Naive thymus-derived CD4-positive, alpha-beta T cell (primary cell): ENCODE measurements at regions of chr17 and their contacts with region 1.

Region 1: GRCh38 chr17:43360739-43361505 is 37.9 kb upstream of the ARL4D start:
- DNase-seq: peak; percentile 69 to 97 (median 91)
- ATAC-seq: peak; percentile 88
- H3K4me3 ChIP-seq: peak overlapping the region; percentile 71
- H3K4me3 Mint-ChIP-seq: peak overlapping the region; percentile 87 to 99 (median 96)
- H3K27ac ChIP-seq: peak overlapping the region; percentile 95
- H3K27ac Mint-ChIP-seq: peak overlapping the region; percentile 98 to 100 (median 100)
- H3K4me1 ChIP-seq: peaks cover 13 to 14% of the 10 kb centered on the region in 2 donors
- H3K4me1 Mint-ChIP-seq: peaks cover 9 to 56% (median 38%) of the 10 kb centered on the region in 7 donors
- H3K27me3 ChIP-seq: no peaks in the 10 kb centered on the region
- H3K27me3 Mint-ChIP-seq: peaks cover 0 to 9% (median 0%) of the 10 kb centered on the region in 5 donors

Region 2: GRCh38 chr17:42337442-42337841 is 1023.5 kb before region 1 on chr17:
- CTCF ChIA-PET with region 1: no interaction called
- POLR2A ChIA-PET with region 1: no interaction called
- intact Hi-C with region 1: loop called in 1 of 2 experiments (anchors 5 kb)
- DNase-seq: peak; percentile 23 to 87 (median 80)
- ATAC-seq: peak; percentile 92
- H3K4me3 ChIP-seq: no peak overlapping the region
- H3K4me3 Mint-ChIP-seq: peak overlapping the region; percentile 52 to 84 (median 72)
- H3K27ac ChIP-seq: peak overlapping the region; percentile 77
- H3K27ac Mint-ChIP-seq: peak overlapping the region; percentile 85 to 98 (median 93)
- H3K4me1 ChIP-seq: peaks cover 11 to 29% of the 10 kb centered on the region in 2 donors
- H3K4me1 Mint-ChIP-seq: peaks cover 18 to 73% (median 38%) of the 10 kb centered on the region in 7 donors
- H3K27me3 ChIP-seq: no peaks in the 10 kb centered on the region
- H3K27me3 Mint-ChIP-seq: no peaks in the 10 kb centered on the region

Region 3: DNA sequence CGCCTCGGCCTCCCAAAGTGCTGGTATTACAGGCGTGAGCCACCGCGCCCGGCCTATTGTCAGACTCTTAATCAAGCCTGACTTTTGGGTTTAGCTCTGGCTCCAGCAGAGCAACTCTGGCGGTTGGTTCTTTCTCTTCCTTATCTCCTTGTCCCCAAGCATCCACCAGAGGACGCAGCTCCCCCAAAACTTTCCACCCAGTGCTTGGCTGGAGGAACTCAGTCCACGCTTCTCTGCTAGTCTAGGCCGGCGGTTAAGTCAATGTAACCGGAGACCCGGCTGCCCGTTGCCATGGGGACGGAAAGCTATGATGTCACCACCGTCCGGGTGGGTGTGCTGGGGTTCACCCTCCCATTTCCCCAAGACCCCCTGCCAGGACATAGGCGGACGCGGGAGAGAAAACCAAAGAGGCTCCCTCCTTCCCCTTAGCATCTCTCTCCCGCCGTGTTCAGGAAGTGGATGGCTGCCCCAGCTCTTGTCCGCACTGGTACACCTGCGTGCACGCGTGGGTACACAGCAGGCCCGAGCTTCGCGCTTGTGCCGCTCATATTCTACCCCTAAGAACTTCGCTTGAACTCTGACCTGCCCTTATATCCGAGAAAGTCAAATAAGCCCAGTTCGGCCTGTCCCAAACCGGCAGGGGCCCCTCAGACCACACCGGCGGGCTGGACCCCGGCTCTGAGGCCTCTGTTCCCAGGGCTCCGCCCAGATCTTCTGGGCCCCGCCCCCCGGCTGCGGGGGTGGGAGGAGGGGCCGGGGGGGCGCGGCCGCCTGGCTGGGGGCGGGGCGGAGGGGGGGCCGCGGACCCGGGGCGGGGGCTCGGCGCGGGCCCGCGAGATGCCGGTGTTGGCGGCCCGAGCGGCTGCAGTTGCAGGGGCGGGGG is 336.3 kb before region 1 on chr17 and contains the start of gene RND2:
- CTCF ChIA-PET with region 1: no interaction called
- POLR2A ChIA-PET with region 1: interaction called, 13 read pairs
- intact Hi-C with region 1: no loop called
- DNase-seq: peak; percentile 65 to 85 (median 77)
- ATAC-seq: peak; percentile 81
- H3K4me3 ChIP-seq: peak within 1 kb of the TSS; percentile 70
- H3K4me3 Mint-ChIP-seq: peak within 1 kb of the TSS; percentile 86 to 95 (median 93)
- H3K27ac ChIP-seq: peak within 1 kb of the TSS; percentile 66
- H3K27ac Mint-ChIP-seq: peak within 1 kb of the TSS; percentile 80 to 91 (median 88)
- H3K4me1 ChIP-seq: peaks cover 21% of the 10 kb centered on the region in 2 donors
- H3K4me1 Mint-ChIP-seq: peaks cover 16 to 28% (median 21%) of the 10 kb centered on the region in 7 donors
- H3K27me3 ChIP-seq: no peaks in the 10 kb centered on the region
- H3K27me3 Mint-ChIP-seq: peaks cover 0 to 16% (median 0%) of the 10 kb centered on the region in 5 donors
- total RNA-seq, gene RND2: 0.08 to 0.74 (median 0.38) TPM in 4 of 5 experiments, not detected in the other

Region 4: GRCh38 chr17:43134774-43135453 is 226.0 kb before region 1 on chr17:
- CTCF ChIA-PET with region 1: no interaction called
- POLR2A ChIA-PET with region 1: no interaction called
- intact Hi-C with region 1: no loop called
- DNase-seq: no peak
- ATAC-seq: no peak
- H3K4me3 ChIP-seq: no peak overlapping the region
- H3K4me3 Mint-ChIP-seq: no peak overlapping the region
- H3K27ac ChIP-seq: no peak overlapping the region
- H3K27ac Mint-ChIP-seq: no peak overlapping the region
- H3K4me1 ChIP-seq: no peaks in the 10 kb centered on the region
- H3K4me1 Mint-ChIP-seq: peaks cover 0 to 12% (median 6%) of the 10 kb centered on the region in 7 donors
- H3K27me3 ChIP-seq: no peaks in the 10 kb centered on the region
- H3K27me3 Mint-ChIP-seq: no peaks in the 10 kb centered on the region

Region 5: GRCh38 chr17:43211480-43212402 is 149.2 kb before region 1 on chr17 and contains the start of gene TMEM106A:
- CTCF ChIA-PET with region 1: no interaction called
- POLR2A ChIA-PET with region 1: interaction called, 24 read pairs
- intact Hi-C with region 1: no loop called
- DNase-seq: peak; percentile 50 to 72 (median 70)
- ATAC-seq: peak; percentile 93
- H3K4me3 ChIP-seq: peak within 1 kb of the TSS; percentile 89
- H3K4me3 Mint-ChIP-seq: peak within 1 kb of the TSS; percentile 89 to 100 (median 96)
- H3K27ac ChIP-seq: peak within 1 kb of the TSS; percentile 86
- H3K27ac Mint-ChIP-seq: peak within 1 kb of the TSS; percentile 89 to 98 (median 94)
- H3K4me1 ChIP-seq: peaks cover 15 to 17% of the 10 kb centered on the region in 2 donors
- H3K4me1 Mint-ChIP-seq: peaks cover 24 to 55% (median 46%) of the 10 kb centered on the region in 7 donors
- H3K27me3 ChIP-seq: no peaks in the 10 kb centered on the region
- H3K27me3 Mint-ChIP-seq: no peaks in the 10 kb centered on the region
- total RNA-seq, gene TMEM106A: 10.4 to 20.7 (median 13.9) TPM

Region 6: DNA sequence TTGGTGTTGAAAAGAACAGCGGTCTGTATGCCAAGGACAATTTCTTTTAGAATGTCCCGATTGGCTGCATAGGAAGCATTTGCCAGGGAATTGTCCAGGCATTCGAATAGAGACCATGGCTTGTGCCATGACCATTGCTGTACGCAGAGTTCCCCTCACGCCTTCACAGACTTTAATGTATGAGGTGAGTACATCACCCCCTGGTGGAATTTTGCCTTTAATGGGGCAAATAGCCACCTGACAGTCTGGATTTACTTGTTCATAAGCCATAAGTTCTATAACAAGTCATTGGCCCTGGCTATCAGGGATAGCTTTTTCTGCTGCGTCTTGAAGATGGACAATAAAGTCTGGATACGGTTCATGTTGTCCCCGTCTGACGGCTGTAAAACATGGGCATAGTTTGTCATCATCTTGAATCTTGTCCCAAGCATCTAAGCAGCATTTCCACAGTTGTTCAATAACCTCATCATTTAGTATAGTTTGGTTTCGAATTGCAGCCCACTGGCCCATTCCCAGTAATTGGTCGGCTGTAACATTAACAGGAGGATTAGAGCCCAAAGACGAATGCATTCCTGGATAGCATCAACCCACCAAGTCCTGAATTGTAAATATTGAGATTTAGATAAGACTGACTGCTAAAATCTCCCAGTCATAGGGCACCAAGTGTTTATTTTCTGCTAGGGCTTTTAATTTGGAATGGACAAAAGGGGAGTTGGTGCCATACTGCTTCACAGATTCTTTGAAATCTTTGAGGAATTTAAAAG is 29.9 kb before region 1 on chr17:
- CTCF ChIA-PET with region 1: interaction called, 4 read pairs
- POLR2A ChIA-PET with region 1: interaction called, 12 read pairs
- intact Hi-C with region 1: no loop called
- DNase-seq: no peak
- ATAC-seq: no peak
- H3K4me3 ChIP-seq: no peak overlapping the region
- H3K4me3 Mint-ChIP-seq: no peak overlapping the region
- H3K27ac ChIP-seq: no peak overlapping the region
- H3K27ac Mint-ChIP-seq: peak overlapping the region in 1 of 9 donors; percentile 41
- H3K4me1 ChIP-seq: peaks cover 4 to 5% of the 10 kb centered on the region in 2 donors
- H3K4me1 Mint-ChIP-seq: peaks cover 7 to 12% (median 9%) of the 10 kb centered on the region in 7 donors
- H3K27me3 ChIP-seq: no peaks in the 10 kb centered on the region
- H3K27me3 Mint-ChIP-seq: peaks cover 0 to 30% (median 16%) of the 10 kb centered on the region in 5 donors

Region 7: DNA sequence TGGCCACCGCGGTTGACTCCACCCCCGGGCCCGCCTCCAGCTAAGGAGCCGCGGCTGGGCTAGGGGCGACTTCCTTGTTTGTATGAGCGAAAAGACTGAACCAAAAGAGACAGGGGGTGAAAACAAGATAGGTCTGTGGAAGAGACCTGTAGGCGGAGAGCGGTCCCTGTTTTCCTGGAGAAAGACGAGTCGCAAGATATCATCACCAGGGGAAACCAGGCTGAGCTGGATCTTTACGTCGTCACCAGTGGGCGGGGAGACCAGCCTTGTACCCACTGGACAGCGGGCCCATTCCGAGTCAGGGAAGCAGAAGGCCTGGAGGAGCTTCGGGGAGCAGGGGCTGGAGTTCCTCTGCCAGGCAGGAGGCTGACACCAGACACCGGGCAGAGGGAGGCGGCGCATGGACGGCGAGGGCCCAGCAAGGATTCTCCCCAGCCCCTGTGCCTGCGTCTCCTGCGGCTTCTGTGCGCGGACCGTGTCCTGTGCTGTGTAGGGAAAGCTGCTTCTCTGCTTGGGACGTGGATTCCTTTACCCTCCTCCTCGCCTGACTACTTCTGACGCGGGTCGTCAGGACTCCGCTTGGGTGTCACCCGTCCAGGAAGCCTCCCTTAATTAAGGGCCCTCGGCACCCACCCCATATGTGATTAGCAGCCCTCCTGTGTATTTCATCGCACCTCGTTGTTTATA is 27.6 kb after region 1 on chr17:
- CTCF ChIA-PET with region 1: interaction called, 8 read pairs
- POLR2A ChIA-PET with region 1: interaction called, 795 read pairs
- intact Hi-C with region 1: loop called (anchors 1 kb)
- DNase-seq: peak; percentile 92 to 98 (median 95)
- ATAC-seq: peak; percentile 84
- H3K4me3 ChIP-seq: peak overlapping the region; percentile 94
- H3K4me3 Mint-ChIP-seq: peak overlapping the region; percentile 91 to 99 (median 96)
- H3K27ac ChIP-seq: peak overlapping the region; percentile 95
- H3K27ac Mint-ChIP-seq: peak overlapping the region; percentile 95 to 100 (median 98)
- H3K4me1 ChIP-seq: peaks cover 4 to 15% of the 10 kb centered on the region in 2 donors
- H3K4me1 Mint-ChIP-seq: peaks cover 16 to 39% (median 31%) of the 10 kb centered on the region in 7 donors
- H3K27me3 ChIP-seq: no peaks in the 10 kb centered on the region
- H3K27me3 Mint-ChIP-seq: no peaks in the 10 kb centered on the region

Region 8: GRCh38 chr17:43778337-43779144 is 417.6 kb after region 1 on chr17 and contains the start of gene DUSP3:
- CTCF ChIA-PET with region 1: no interaction called
- POLR2A ChIA-PET with region 1: no interaction called
- intact Hi-C with region 1: no loop called
- DNase-seq: peak; percentile 70 to 82 (median 78)
- ATAC-seq: peak; percentile 97
- H3K4me3 ChIP-seq: peak within 1 kb of the TSS; percentile 74
- H3K4me3 Mint-ChIP-seq: peak within 1 kb of the TSS; percentile 80 to 89 (median 84)
- H3K27ac ChIP-seq: peak within 1 kb of the TSS; percentile 79
- H3K27ac Mint-ChIP-seq: peak within 1 kb of the TSS in 7 of 9 donors; percentile 71 to 86 (median 78)
- H3K4me1 ChIP-seq: peaks cover 7% of the 10 kb centered on the region in 2 donors
- H3K4me1 Mint-ChIP-seq: peaks cover 0 to 15% (median 10%) of the 10 kb centered on the region in 7 donors
- H3K27me3 ChIP-seq: no peaks in the 10 kb centered on the region
- H3K27me3 Mint-ChIP-seq: peaks cover 16 to 38% (median 24%) of the 10 kb centered on the region in 5 donors
- total RNA-seq, gene DUSP3: 8.5 to 31.0 (median 11.0) TPM

Region 9: DNA sequence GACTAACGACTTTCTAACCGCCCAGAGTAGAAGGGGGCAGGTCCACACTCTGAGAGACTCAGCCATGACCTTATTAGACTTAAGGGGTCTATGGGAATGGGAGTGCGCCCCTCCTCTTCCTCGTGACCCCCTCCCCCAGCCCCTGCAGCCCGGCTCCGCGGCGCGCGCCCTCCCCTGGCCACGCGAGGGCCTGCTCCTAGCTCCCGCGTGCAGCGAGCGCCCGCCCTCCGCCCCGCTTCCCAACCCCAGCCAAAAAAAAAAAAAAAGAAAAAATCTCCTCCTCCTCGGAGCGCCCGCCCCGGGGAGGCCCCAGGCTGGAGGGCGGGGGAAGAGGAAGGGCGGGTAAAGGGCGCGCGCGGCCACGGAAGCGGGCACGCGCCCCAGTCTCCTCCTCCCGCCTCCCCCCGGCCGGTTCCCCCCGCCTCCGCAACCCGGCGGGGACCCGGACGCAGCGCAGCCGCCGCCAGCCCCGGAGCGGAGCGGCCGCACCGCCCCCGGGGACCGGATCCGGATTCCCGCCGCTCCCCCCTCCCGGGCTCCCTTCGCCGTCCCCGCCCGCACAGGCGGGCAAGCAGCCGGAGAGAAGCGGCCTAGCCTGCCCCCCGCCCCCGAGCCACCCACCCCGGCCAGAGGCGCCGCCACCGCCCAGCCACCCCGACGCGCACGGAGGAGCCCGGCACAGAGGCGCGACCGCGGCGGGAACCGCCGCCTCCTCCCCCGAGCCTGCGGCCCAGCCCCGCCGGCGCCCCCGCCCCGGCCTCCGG is 857.6 kb after region 1 on chr17:
- CTCF ChIA-PET with region 1: no interaction called
- POLR2A ChIA-PET with region 1: interaction called, 3 read pairs
- intact Hi-C with region 1: loop called in 1 of 2 experiments (anchors 10 kb)
- DNase-seq: peak; percentile 82 to 93 (median 92)
- ATAC-seq: peak; percentile 80
- H3K4me3 ChIP-seq: peak overlapping the region; percentile 68
- H3K4me3 Mint-ChIP-seq: peak overlapping the region; percentile 76 to 94 (median 86)
- H3K27ac ChIP-seq: peak overlapping the region; percentile 90
- H3K27ac Mint-ChIP-seq: peak overlapping the region; percentile 84 to 99 (median 97)
- H3K4me1 ChIP-seq: peaks cover 38 to 42% of the 10 kb centered on the region in 2 donors
- H3K4me1 Mint-ChIP-seq: peaks cover 48 to 53% (median 52%) of the 10 kb centered on the region in 7 donors
- H3K27me3 ChIP-seq: no peaks in the 10 kb centered on the region
- H3K27me3 Mint-ChIP-seq: no peaks in the 10 kb centered on the region